CD4-positive, alpha-beta memory T cell (primary cell): ENCODE measurements at regions of chr1 and their contacts with region 1.

Region 1: GRCh38 chr1:200979574-200980451 is 43.7 kb downstream of the KIF21B start:
- DNase-seq: peak; percentile 42 to 57 (median 53)
- H3K4me3 ChIP-seq: no peak overlapping the region
- H3K4me3 Mint-ChIP-seq: no peak overlapping the region
- H3K27ac ChIP-seq: no peak overlapping the region
- H3K27ac Mint-ChIP-seq: peak overlapping the region in 1 of 7 donors; percentile 61
- H3K4me1 ChIP-seq: no peaks in the 10 kb centered on the region
- H3K4me1 Mint-ChIP-seq: peaks cover 0 to 1% (median 0%) of the 10 kb centered on the region in 4 donors
- H3K27me3 ChIP-seq: no peaks in the 10 kb centered on the region
- H3K27me3 Mint-ChIP-seq: no peaks in the 10 kb centered on the region

Region 2: GRCh38 chr1:200992382-200993048 is 12.7 kb after region 1 on chr1:
- CTCF ChIA-PET with region 1: interaction called, 32 read pairs
- POLR2A ChIA-PET with region 1: no interaction called
- intact Hi-C with region 1: no loop called
- DNase-seq: peak in 1 of 5 donors; percentile 25
- H3K4me3 ChIP-seq: no peak overlapping the region
- H3K4me3 Mint-ChIP-seq: no peak overlapping the region
- H3K27ac ChIP-seq: no peak overlapping the region
- H3K27ac Mint-ChIP-seq: peak overlapping the region in 2 of 7 donors; percentile 10 to 87
- H3K4me1 ChIP-seq: no peaks in the 10 kb centered on the region
- H3K4me1 Mint-ChIP-seq: peaks cover 0 to 2% (median under 1%) of the 10 kb centered on the region in 4 donors
- H3K27me3 ChIP-seq: no peaks in the 10 kb centered on the region
- H3K27me3 Mint-ChIP-seq: no peaks in the 10 kb centered on the region

Region 3: GRCh38 chr1:201016211-201016651 is 36.4 kb after region 1 on chr1:
- CTCF ChIA-PET with region 1: interaction called, 54 read pairs
- POLR2A ChIA-PET with region 1: interaction called, 5 read pairs
- intact Hi-C with region 1: loop called (anchors 5 kb)
- DNase-seq: no peak
- H3K4me3 ChIP-seq: no peak overlapping the region
- H3K4me3 Mint-ChIP-seq: peak overlapping the region in 5 of 8 donors; percentile 21 to 75 (median 46)
- H3K27ac ChIP-seq: no peak overlapping the region
- H3K27ac Mint-ChIP-seq: peak overlapping the region; percentile 25 to 95 (median 80)
- H3K4me1 ChIP-seq: peaks cover 100% of the 10 kb centered on the region
- H3K4me1 Mint-ChIP-seq: peaks cover 70 to 98% (median 85%) of the 10 kb centered on the region in 4 donors
- H3K27me3 ChIP-seq: no peaks in the 10 kb centered on the region
- H3K27me3 Mint-ChIP-seq: no peaks in the 10 kb centered on the region